GM12878 (cell line): ENCODE measurements at regions of chr9 and their contacts with region 1.

Region 1: GRCh38 chr9:97921959-97922724 is at the start of gene TRMO:
- DNase-seq: peak; percentile 98
- ATAC-seq: peak; percentile 90
- H3K4me3 ChIP-seq: peak within 1 kb of the TSS; percentile 62
- H3K27ac ChIP-seq: peak within 1 kb of the TSS; percentile 83
- H3K4me1 ChIP-seq: peaks cover 9% of the 10 kb centered on the region
- H3K27me3 ChIP-seq: no peaks in the 10 kb centered on the region
- CTCF ChIP-seq: peak; percentile 64 to 89 (median 69)
- EP300 ChIP-seq: peak; percentile 72 to 73; a peak in 2 of 4 replicates
- POLR2A ChIP-seq: peak; percentile 89
- RAD21 ChIP-seq: peak; percentile 23
- polyA plus RNA-seq, gene TRMO: 5.8 to 7.7 TPM

Region 2: GRCh38 chr9:97890038-97890437 is 32.1 kb before region 1 on chr9:
- CTCF ChIA-PET with region 1: interaction called, 12 read pairs
- POLR2A ChIA-PET with region 1: no interaction called
- RAD21 ChIA-PET with region 1: no interaction called
- SMC1A ChIA-PET with region 1: interaction called, 4 read pairs
- in situ Hi-C with region 1: no loop called
- intact Hi-C with region 1: no loop called
- DNase-seq: no peak
- ATAC-seq: peak; percentile 86
- H3K4me3 ChIP-seq: no peak overlapping the region
- H3K27ac ChIP-seq: no peak overlapping the region
- H3K4me1 ChIP-seq: no peaks in the 10 kb centered on the region
- H3K27me3 ChIP-seq: no peaks in the 10 kb centered on the region
- CTCF ChIP-seq: peak; percentile 59 to 88 (median 83)
- EP300 ChIP-seq: no peak
- POLR2A ChIP-seq: no peak
- RAD21 ChIP-seq: peak; percentile 51

Region 3: DNA sequence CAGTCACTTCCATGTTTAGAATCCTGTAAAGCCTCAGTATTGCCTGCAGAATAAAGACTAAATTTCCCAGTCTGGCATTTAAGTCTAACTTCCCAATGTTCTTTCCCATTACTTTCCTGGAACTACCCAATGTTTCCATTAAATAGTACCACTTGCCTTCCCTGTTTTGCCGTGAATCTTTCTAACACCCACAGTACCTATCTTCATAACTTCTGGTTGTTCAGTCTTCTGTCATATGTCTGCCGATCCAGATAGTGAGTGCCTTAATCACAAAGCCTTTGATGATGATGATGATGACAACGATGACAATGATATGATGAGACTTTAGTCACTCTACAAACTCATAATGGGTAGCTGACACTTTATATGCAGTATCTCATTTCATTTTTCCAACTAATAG is 22.5 kb after region 1 on chr9:
- CTCF ChIA-PET with region 1: interaction called, 11 read pairs
- POLR2A ChIA-PET with region 1: interaction called, 4 read pairs
- RAD21 ChIA-PET with region 1: interaction called, 4 read pairs
- SMC1A ChIA-PET with region 1: interaction called, 3 read pairs
- in situ Hi-C with region 1: no loop called
- intact Hi-C with region 1: no loop called
- DNase-seq: no peak
- ATAC-seq: no peak
- H3K4me3 ChIP-seq: no peak overlapping the region
- H3K27ac ChIP-seq: no peak overlapping the region
- H3K4me1 ChIP-seq: no peaks in the 10 kb centered on the region
- H3K27me3 ChIP-seq: no peaks in the 10 kb centered on the region
- CTCF ChIP-seq: no peak
- EP300 ChIP-seq: no peak
- POLR2A ChIP-seq: no peak
- RAD21 ChIP-seq: no peak

Region 4: DNA sequence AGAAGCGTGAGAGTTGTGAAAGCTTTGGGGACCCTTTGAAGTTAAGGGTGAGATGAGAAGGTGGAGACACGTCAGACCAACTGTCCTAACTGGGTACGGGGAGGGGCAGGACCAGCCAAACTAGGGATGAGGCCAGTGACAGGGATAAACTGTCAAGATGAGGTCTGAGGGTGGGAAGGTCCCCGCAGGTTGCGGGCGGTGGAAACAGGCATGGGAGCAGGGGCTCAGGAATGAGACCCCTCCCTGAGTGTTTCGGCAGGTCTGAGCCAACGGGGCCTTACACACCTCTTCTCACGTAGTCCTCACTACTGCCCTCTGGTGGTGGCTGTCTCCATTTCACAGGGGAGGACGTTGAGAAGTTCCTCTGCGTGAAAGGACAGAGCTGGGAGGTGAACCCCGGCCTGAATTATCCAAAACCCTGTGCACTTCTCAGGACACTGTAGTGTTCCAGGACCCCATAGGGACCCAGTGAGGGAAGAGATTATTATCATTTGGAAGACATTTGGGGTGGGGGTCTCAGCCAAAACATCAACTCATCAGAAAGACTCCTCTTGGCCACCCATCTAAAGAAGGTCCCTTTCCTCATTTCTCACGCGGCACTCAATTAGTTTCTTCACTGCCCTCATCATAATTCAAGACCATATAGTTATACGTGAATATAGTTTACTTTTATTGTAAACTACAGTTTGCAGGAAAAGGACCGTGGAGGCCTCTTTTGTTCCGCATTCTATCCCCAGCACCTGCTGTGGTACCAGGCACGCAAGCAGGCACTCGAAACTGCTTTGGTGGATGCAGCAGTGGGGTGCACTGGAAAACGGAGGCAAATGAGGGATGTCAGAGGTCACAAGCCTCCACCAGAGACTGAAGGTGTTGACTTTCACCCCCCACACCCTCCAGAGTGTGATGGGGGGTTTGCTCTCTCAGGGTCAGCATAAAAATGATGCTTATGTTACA is 112.7 kb after region 1 on chr9:
- CTCF ChIA-PET with region 1: interaction called, 31 read pairs
- POLR2A ChIA-PET with region 1: no interaction called
- RAD21 ChIA-PET with region 1: interaction called, 11 read pairs
- SMC1A ChIA-PET with region 1: interaction called, 5 read pairs
- in situ Hi-C with region 1: no loop called
- intact Hi-C with region 1: loop called (anchors 1 kb)
- DNase-seq: peak; percentile 61
- ATAC-seq: peak; percentile 84
- H3K4me3 ChIP-seq: peak overlapping the region; percentile 25; the same call in 1 of the 2 replicates
- H3K27ac ChIP-seq: peak overlapping the region; percentile 89
- H3K4me1 ChIP-seq: peaks cover 46% of the 10 kb centered on the region
- H3K27me3 ChIP-seq: no peaks in the 10 kb centered on the region
- CTCF ChIP-seq: peak; percentile 72 to 88 (median 81)
- EP300 ChIP-seq: no peak
- POLR2A ChIP-seq: no peak
- RAD21 ChIP-seq: peak; percentile 53

Region 5: DNA sequence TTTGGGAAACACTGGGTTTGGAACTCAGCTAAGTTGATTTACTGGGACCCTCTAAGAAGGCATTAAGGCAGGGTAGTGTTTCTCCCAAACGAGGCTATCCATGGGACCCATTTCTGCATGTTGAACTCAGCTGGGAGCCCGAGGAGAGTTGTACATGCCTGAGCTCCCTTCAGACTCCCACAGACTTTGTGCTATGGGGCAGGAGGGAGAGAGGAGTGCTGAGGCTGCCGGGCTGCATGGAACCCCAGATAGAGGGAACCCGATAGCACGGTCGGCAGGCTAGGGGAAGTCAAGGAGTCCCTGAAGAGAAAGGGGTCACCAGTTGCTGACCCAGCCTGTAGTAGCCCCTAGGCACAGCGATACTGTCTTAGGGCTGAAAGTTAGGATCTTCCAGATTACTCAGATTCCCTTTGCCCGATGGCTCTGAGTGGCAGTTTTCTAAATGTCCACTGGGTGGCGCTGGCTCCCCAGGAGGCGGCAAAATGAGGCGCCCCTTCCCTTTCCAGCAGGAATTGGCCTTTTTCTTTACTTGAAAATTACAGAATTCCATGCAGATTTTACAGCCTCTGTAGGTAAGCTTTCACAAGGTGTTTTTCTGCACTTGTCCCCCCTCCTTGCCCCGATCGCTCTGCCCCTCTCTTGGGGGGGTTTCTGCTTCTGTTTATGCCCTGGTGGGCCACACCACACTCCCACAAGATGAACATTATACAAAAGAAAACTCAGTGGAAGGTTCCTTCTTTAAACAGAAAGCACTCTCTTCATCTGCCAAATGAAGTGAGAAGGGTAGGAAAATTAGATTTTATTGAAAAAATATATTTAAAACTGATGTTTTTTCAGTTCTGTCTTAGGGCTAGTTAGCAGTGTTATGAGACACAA is 152.2 kb after region 1 on chr9:
- CTCF ChIA-PET with region 1: interaction called, 10 read pairs
- POLR2A ChIA-PET with region 1: no interaction called
- RAD21 ChIA-PET with region 1: interaction called, 12 read pairs
- SMC1A ChIA-PET with region 1: no interaction called
- in situ Hi-C with region 1: no loop called
- intact Hi-C with region 1: no loop called
- DNase-seq: no peak
- ATAC-seq: peak; percentile 81
- H3K4me3 ChIP-seq: no peak overlapping the region
- H3K27ac ChIP-seq: no peak overlapping the region
- H3K4me1 ChIP-seq: no peaks in the 10 kb centered on the region
- H3K27me3 ChIP-seq: no peaks in the 10 kb centered on the region
- CTCF ChIP-seq: peak; percentile 85 to 95 (median 94)
- EP300 ChIP-seq: no peak
- POLR2A ChIP-seq: no peak
- RAD21 ChIP-seq: peak; percentile 90

Region 6: DNA sequence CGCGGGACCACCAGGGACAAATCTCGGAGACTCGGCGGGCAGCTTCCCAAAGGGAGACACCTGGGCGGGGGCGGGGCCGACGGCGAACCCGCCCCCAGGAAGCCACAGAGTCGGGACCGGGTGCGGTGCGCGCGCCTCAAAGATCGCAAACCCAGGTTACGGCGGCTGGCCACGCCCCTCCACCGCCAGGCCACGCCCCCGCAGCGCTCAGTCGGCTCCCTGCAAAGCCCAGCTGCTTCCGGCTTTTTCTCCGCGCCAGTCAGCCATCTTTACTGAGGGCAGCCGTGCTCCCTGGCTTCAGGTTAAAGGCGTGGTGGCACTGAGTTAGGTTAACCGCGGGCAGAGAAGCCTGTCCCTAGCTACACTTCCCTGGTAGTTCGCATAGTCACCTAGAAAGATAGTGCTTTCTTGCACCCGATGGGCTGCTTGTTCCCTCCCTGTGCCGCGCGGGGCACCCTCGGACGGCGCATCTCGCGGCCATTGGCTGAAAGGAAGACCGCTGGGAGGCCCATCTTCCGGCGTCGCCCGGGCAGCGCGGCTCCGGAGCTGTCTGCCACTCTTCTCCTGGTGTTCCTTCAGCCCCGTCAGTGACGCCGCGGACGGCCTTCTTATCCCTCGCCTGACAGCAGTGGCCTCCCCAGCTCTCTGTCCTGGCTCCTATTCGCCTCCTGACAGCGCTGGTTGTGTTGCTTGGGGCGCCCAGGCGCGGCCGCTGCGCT is 333.6 kb after region 1 on chr9 and contains the start of gene TBC1D2:
- CTCF ChIA-PET with region 1: interaction called, 41 read pairs
- POLR2A ChIA-PET with region 1: interaction called, 4 read pairs
- RAD21 ChIA-PET with region 1: interaction called, 19 read pairs
- SMC1A ChIA-PET with region 1: interaction called, 9 read pairs
- in situ Hi-C with region 1: no loop called
- intact Hi-C with region 1: no loop called
- DNase-seq: peak; percentile 85
- ATAC-seq: peak; percentile 94
- H3K4me3 ChIP-seq: peak within 1 kb of the TSS; percentile 75
- H3K27ac ChIP-seq: peak within 1 kb of the TSS; percentile 93
- H3K4me1 ChIP-seq: peaks cover 4% of the 10 kb centered on the region
- H3K27me3 ChIP-seq: no peaks in the 10 kb centered on the region
- CTCF ChIP-seq: peak; percentile 15 to 28 (median 21); a peak in 2 of 6 replicates
- EP300 ChIP-seq: no peak
- POLR2A ChIP-seq: peak; percentile 92
- RAD21 ChIP-seq: no peak
- polyA plus RNA-seq, gene TBC1D2: 0.04 to 0.06 TPM